Astrocyte of the cerebellum (primary cell): ENCODE measurements at regions of chr12 and their contacts with region 1.

Region 1: GRCh38 chr12:94634717-94635116 is 15.6 kb downstream of the TMCC3 start:
- DNase-seq: no peak
- H3K4me3 ChIP-seq: no peak overlapping the region
- CTCF ChIP-seq: no peak

Region 2: DNA sequence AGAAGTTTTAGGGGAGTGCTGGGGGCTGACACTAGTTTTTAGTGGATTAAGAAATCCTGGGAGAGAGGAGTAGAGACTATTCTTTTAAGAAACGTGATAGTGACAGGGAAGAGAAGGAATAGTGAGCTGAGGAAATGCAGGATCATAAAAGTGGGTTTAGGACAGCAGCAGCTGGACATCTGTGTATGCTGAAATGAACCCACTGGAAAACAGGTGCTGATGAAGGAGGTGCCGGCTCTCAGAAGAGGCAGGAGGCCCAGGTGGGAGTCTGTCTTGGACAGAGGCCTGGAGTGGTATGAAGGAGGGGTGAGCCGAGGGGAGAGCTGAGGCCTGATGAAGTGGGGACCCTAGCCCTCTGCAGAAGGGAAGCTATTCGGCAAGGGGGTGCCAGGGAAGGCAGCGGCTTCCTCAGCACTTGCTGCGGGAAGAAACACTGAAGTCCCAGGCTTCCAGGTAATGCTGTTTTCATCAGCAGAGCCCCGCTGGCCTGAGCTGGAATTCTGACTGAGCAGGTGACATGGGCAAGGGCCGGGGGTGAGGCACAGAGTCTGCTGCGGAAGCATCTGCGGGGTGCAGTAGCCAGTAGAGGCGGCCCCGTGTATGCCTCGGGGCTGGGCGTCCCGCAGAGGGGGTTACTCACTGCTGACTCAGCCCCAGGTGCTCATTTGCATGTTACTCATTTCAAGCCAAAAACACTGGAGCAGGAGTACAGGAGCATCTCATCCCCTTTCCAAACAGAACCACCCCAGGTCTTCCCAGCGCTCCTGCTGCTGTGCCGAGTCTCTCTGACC is 74.1 kb before region 1 on chr12:
- in situ Hi-C with region 1: loop called (anchors 5 kb)
- DNase-seq: peak; percentile 69
- H3K4me3 ChIP-seq: no peak overlapping the region
- CTCF ChIP-seq: no peak

Region 3: DNA sequence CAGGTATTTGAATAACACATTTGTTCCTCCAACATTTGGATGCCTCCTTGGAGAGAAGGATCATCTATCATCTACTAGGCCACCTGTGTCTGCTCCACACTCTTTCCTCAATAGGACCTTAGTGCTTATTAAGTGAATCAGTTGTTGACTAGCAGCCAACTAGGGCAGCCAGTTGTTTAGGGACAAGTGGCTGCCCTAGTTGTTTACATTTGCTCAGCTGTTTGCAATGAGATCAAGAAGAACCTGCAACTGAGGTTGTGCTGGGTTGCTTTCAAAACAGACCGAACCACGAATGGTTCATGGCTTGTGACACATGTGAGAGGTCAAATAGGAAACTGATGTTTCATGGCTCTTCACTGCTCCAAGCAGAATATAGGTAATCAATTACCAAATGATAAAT is 38.1 kb before region 1 on chr12:
- in situ Hi-C with region 1: no loop called
- DNase-seq: no peak
- H3K4me3 ChIP-seq: no peak overlapping the region
- CTCF ChIP-seq: no peak

Region 4: GRCh38 chr12:94663702-94664101 is 29.0 kb after region 1 on chr12:
- in situ Hi-C with region 1: no loop called
- DNase-seq: no peak
- H3K4me3 ChIP-seq: no peak overlapping the region
- CTCF ChIP-seq: no peak